Mammary epithelial cell (primary cell): ENCODE measurements at regions of chrX and their contacts with region 1.

Region 1: GRCh38 chrX:20442597-20442996 is 175.9 kb upstream of the RPS6KA3 start:
- DNase-seq: peak; percentile 46
- H3K4me3 ChIP-seq: no peak overlapping the region
- H3K27ac ChIP-seq: no peak overlapping the region
- H3K4me1 ChIP-seq: no peaks in the 10 kb centered on the region
- H3K27me3 ChIP-seq: no peaks in the 10 kb centered on the region
- CTCF ChIP-seq: peak; percentile 47 to 77

Region 2: DNA sequence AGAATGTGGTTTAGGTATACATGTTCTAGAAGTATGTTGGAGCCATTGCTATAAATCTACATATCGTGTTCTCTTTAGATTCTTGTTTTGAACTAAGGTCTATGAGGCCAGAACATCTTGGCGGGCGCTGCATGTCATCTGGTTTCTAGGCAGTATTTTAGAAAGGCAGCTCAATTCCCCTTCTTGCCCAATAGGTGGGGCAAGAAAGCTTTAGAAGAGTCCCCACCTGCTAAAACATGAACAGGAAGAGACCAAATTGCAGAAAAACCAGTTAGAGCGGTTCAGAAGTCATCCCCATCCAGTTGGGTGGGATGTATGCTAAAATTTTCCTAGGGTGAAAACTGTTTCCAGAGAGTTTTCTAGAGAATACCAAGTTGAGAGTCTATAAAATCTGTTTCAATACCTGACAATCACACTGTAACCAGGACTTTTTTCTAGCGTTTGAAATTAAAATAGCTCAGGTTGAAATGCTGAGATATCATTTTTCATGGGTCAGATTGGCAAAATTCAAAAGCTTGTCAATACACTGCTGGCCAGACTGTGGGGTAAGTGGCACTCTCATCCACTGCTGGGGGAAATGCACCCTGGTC is 537.7 kb before region 1 on chrX:
- CTCF ChIA-PET with region 1: no interaction called
- dilution Hi-C with region 1: no loop called
- in situ Hi-C with region 1: no loop called
- intact Hi-C with region 1: loop called (anchors 5 kb)
- DNase-seq: peak; percentile 54
- H3K4me3 ChIP-seq: no peak overlapping the region
- H3K27ac ChIP-seq: no peak overlapping the region
- H3K4me1 ChIP-seq: peaks cover 3% of the 10 kb centered on the region
- H3K27me3 ChIP-seq: no peaks in the 10 kb centered on the region
- CTCF ChIP-seq: peak; percentile 54 to 80

Region 3: GRCh38 chrX:20141281-20142220 is 301.0 kb before region 1 on chrX and contains the start of gene EIF1AX:
- CTCF ChIA-PET with region 1: no interaction called
- dilution Hi-C with region 1: no loop called
- in situ Hi-C with region 1: no loop called
- intact Hi-C with region 1: loop called (anchors 5 kb)
- DNase-seq: peak; percentile 99
- H3K4me3 ChIP-seq: peak within 1 kb of the TSS; percentile 82 to 96 (median 93)
- H3K27ac ChIP-seq: peak within 1 kb of the TSS; percentile 91
- H3K4me1 ChIP-seq: peaks cover 16% of the 10 kb centered on the region
- H3K27me3 ChIP-seq: no peaks in the 10 kb centered on the region
- CTCF ChIP-seq: no peak
- total RNA-seq, gene EIF1AX: 65.5 to 201 TPM

Region 4: GRCh38 chrX:20252381-20253231 is 190.0 kb before region 1 on chrX:
- CTCF ChIA-PET with region 1: no interaction called
- dilution Hi-C with region 1: no loop called
- in situ Hi-C with region 1: loop called in 1 of 2 experiments (anchors 10 kb)
- intact Hi-C with region 1: loop called (anchors 1 kb)
- DNase-seq: peak; percentile 42
- H3K4me3 ChIP-seq: no peak overlapping the region
- H3K27ac ChIP-seq: no peak overlapping the region
- H3K4me1 ChIP-seq: peaks cover 7% of the 10 kb centered on the region
- H3K27me3 ChIP-seq: no peaks in the 10 kb centered on the region
- CTCF ChIP-seq: peak; percentile 78 to 90

Region 5: DNA sequence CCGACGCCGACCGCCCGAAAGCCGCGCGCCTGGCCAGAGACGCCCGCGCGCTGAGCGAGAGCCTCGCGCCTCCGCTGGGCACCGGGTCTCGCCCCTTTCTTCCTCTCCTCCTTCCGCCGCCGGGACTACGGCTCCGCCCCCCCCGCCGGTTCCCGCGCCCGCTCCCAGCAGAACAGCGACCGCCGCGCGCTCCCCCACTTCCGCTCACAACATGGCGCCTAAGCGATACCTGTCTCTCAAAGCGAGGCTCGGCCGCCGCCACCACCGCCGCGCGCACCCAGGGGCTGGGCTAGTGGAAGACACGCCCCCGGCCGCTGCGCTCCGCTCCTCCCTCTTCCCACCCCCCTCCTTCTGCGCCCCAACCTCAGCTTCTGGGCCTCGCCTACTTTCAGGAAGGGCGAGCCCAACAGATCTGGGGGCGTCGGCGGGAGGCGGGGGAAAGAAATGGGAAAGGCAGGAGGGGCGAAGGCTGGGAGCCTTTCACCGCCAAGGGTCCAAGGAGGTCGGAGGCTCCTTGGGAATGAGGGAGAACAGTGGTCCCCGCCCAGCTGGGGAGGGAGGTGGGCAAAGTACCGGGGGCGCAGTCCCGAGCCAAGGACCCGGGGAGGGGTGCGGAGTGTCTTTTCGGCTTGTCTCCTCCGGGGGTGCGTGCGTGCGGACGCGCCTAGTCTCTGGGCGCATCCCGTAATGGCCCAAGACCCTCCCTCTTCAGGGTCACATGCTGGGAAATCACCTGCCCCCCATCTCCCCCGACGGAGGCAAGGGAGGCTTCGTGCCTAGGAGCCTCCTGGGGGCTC is 175.6 kb before region 1 on chrX and contains the start of gene RPS6KA3:
- CTCF ChIA-PET with region 1: no interaction called
- dilution Hi-C with region 1: no loop called
- in situ Hi-C with region 1: loop called in 1 of 2 experiments (anchors 10 kb)
- intact Hi-C with region 1: no loop called
- DNase-seq: peak; percentile 87
- H3K4me3 ChIP-seq: peak within 1 kb of the TSS; percentile 51 to 74 (median 58)
- H3K27ac ChIP-seq: peak within 1 kb of the TSS; percentile 91
- H3K4me1 ChIP-seq: peaks cover 7% of the 10 kb centered on the region
- H3K27me3 ChIP-seq: no peaks in the 10 kb centered on the region
- CTCF ChIP-seq: no peak
- total RNA-seq, gene RPS6KA3: 34.4 to 37.0 TPM